ENCODE measurements at regions of chr15 and their contacts with region 1.

Region 1: DNA sequence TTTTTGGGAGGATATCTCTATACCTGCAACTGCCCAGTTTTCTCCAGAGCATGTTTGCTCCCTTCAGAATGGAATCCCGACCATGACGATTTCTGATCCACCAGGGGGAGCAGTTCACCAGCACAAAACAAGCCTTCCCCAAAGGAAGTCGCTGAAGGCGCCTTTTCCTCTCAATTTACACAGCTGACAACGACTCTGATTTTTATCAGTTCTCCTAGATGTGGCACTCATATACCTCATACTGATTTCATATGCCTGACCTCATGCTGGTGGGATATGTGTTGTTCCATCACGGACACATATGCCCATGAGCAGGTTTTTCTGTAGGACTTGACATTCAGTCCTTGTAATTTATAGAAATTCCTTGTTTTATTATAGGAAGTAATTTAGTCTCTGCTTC is 1028.2 kb downstream of the MCTP2 start:
- DNase-seq: peak; percentile 47
- ATAC-seq: peak; percentile 95
- H3K4me3 ChIP-seq: no peak overlapping the region
- H3K27ac ChIP-seq: no peak overlapping the region
- H3K4me1 ChIP-seq: no peaks in the 10 kb centered on the region
- H3K27me3 ChIP-seq: no peaks in the 10 kb centered on the region
- CTCF ChIP-seq: peak; percentile 69 to 81 (median 75)
- EP300 ChIP-seq: no peak
- POLR2A ChIP-seq: no peak
- RAD21 ChIP-seq: peak; percentile 91

Region 2: GRCh38 chr15:94582369-94582768 is 677.1 kb before region 1 on chr15:
- CTCF ChIA-PET with region 1: interaction called, 7 read pairs
- POLR2A ChIA-PET with region 1: no interaction called
- RAD21 ChIA-PET with region 1: no interaction called
- SMC1A ChIA-PET with region 1: interaction called, 3 read pairs
- in situ Hi-C with region 1: no loop called
- intact Hi-C with region 1: loop called (anchors 10 kb)
- DNase-seq: peak; percentile 9
- ATAC-seq: peak; percentile 71
- H3K4me3 ChIP-seq: no peak overlapping the region
- H3K27ac ChIP-seq: no peak overlapping the region
- H3K4me1 ChIP-seq: peaks cover 17% of the 10 kb centered on the region; the same call in 1 of the 2 replicates
- H3K27me3 ChIP-seq: no peaks in the 10 kb centered on the region; a peak in 2 of 4 replicates
- CTCF ChIP-seq: peak; percentile 43 to 65 (median 48); a peak in 4 of 6 replicates
- EP300 ChIP-seq: no peak
- POLR2A ChIP-seq: no peak
- RAD21 ChIP-seq: peak; percentile 54

Region 3: GRCh38 chr15:95291898-95292472 is 32.5 kb after region 1 on chr15:
- CTCF ChIA-PET with region 1: interaction called, 92 read pairs
- POLR2A ChIA-PET with region 1: interaction called, 5 read pairs
- RAD21 ChIA-PET with region 1: interaction called, 104 read pairs
- SMC1A ChIA-PET with region 1: interaction called, 310 read pairs
- in situ Hi-C with region 1: no loop called
- intact Hi-C with region 1: loop called (anchors 2 kb)
- DNase-seq: no peak
- ATAC-seq: peak; percentile 38; the same call in 2 of the 3 replicates
- H3K4me3 ChIP-seq: no peak overlapping the region
- H3K27ac ChIP-seq: no peak overlapping the region
- H3K4me1 ChIP-seq: peaks cover 4% of the 10 kb centered on the region; the same call in 1 of the 2 replicates
- H3K27me3 ChIP-seq: no peaks in the 10 kb centered on the region
- CTCF ChIP-seq: peak; percentile 43 to 51 (median 44)
- EP300 ChIP-seq: no peak
- POLR2A ChIP-seq: no peak
- RAD21 ChIP-seq: peak; percentile 50

Region 4: DNA sequence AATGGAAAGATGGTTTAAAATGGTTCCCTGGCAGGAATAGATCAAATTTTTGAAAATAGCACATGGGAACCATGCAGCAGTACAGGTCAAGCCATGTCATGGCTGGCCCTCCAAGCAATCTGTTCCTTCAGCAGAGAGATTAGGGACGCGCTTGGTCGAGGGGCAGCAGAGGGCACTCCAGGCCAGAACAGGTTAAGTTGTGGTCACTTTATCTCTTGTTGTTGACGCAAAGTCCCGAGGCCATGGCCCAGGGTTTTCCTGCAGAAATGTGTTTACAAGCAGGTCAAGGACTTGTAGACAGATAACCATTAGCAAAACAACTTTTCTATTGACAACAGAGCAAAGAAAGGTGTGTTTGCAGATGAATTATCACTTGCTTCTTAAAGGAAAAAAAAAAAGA is 501.0 kb after region 1 on chr15:
- CTCF ChIA-PET with region 1: interaction called, 6 read pairs
- POLR2A ChIA-PET with region 1: no interaction called
- RAD21 ChIA-PET with region 1: interaction called, 3 read pairs
- SMC1A ChIA-PET with region 1: interaction called, 10 read pairs
- in situ Hi-C with region 1: no loop called
- intact Hi-C with region 1: no loop called
- DNase-seq: no peak
- ATAC-seq: peak; percentile 83
- H3K4me3 ChIP-seq: no peak overlapping the region
- H3K27ac ChIP-seq: no peak overlapping the region
- H3K4me1 ChIP-seq: no peaks in the 10 kb centered on the region
- H3K27me3 ChIP-seq: no peaks in the 10 kb centered on the region
- CTCF ChIP-seq: peak; percentile 11 to 28 (median 14); a peak in 2 of 6 replicates
- EP300 ChIP-seq: no peak
- POLR2A ChIP-seq: no peak
- RAD21 ChIP-seq: peak; percentile 46

Region 5: DNA sequence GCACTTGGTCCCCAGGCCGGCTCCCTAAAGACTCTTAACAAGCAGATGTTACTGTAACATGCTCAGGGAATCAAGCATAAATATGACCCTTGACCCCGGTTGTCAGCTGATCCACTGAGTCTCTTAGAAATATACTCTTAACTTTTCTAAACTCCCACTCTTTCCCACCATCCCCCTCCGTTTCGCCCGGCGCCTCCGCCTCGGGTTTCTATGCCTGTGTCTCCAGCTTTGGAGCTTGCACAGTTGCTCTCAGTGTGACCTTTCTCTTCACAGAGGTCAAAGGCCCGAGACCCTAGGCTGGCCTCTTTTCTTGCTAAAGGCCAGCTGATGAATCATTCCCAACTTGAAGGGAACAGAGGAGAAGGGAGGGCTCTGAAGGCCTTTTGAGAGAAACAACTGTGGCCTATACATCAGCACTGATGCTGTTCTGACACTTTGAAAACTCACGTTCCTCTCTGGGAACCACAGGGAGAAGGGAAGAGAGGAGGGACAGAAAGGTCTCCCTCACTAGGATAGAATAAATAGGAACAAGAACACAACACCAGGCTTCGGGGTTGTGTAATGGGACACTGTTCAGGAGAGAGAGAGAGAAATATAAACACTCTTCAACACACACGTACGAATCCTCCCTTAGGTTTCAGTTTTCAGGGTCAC is 586.5 kb after region 1 on chr15:
- CTCF ChIA-PET with region 1: interaction called, 4 read pairs
- POLR2A ChIA-PET with region 1: no interaction called
- RAD21 ChIA-PET with region 1: interaction called, 9 read pairs
- SMC1A ChIA-PET with region 1: interaction called, 8 read pairs
- in situ Hi-C with region 1: no loop called
- intact Hi-C with region 1: loop called (anchors 5 kb)
- DNase-seq: no peak
- ATAC-seq: peak; percentile 58
- H3K4me3 ChIP-seq: no peak overlapping the region
- H3K27ac ChIP-seq: peak overlapping the region; percentile 51
- H3K4me1 ChIP-seq: peaks cover 7% of the 10 kb centered on the region; the same call in 1 of the 2 replicates
- H3K27me3 ChIP-seq: no peaks in the 10 kb centered on the region
- CTCF ChIP-seq: no peak
- EP300 ChIP-seq: no peak
- POLR2A ChIP-seq: no peak
- RAD21 ChIP-seq: no peak

Region 6: DNA sequence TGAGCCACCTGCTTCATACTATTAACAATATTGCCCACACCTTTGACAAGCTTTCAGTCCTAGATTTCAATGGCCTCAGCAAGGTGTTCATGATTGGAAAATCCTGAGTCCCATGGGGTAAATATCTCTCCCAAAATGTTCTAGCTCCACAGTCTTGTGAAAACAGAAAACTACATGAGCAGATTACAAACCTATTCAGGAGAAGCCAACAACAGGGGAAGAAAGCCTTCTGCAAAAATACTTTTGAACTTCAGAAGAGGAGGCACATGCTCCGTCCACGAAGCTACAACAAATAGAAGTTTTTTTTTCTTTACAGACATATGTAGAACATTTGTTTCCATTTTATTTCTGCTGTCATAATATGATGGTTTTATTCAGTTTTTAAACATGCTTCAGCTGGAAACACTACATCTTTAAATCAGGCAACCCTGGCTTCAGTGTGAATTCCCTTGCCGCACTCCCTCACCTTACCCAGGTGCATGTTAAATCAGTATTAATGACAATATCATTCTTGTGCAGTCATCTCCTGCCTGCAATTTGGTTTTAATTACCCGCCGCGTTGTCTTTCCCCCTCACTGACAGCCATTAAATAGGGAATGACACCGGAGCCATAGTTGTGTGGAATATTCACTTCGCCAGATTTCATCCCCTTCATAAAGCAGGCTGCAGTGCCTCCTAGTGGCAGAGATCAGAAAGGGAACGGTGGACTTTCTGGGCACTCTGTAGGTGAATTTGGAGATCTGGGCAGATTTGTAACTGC is 1975.5 kb after region 1 on chr15:
- CTCF ChIA-PET with region 1: interaction called, 9 read pairs
- POLR2A ChIA-PET with region 1: no interaction called
- RAD21 ChIA-PET with region 1: interaction called, 4 read pairs
- SMC1A ChIA-PET with region 1: interaction called, 4 read pairs
- in situ Hi-C with region 1: loop called (anchors 10 kb)
- intact Hi-C with region 1: no loop called
- DNase-seq: no peak
- ATAC-seq: peak; percentile 79
- H3K4me3 ChIP-seq: no peak overlapping the region
- H3K27ac ChIP-seq: no peak overlapping the region
- H3K4me1 ChIP-seq: no peaks in the 10 kb centered on the region
- H3K27me3 ChIP-seq: no peaks in the 10 kb centered on the region
- CTCF ChIP-seq: peak; percentile 66 to 74 (median 73)
- EP300 ChIP-seq: no peak
- POLR2A ChIP-seq: no peak
- RAD21 ChIP-seq: peak; percentile 84

Measured in GM12878 (cell line).